ENCODE measurements at regions of chr3 and their contacts with region 1.

Region 1: GRCh38 chr3:123489400-123490004 is 40.6 kb upstream of the ADCY5 start:
- DNase-seq: peak; percentile 67
- H3K4me3 ChIP-seq: no peak overlapping the region
- H3K27ac ChIP-seq: no peak overlapping the region
- H3K4me1 ChIP-seq: no peaks in the 10 kb centered on the region
- H3K27me3 ChIP-seq: no peaks in the 10 kb centered on the region
- CTCF ChIP-seq: peak; percentile 85 to 89
- POLR2A ChIP-seq: no peak

Region 2: GRCh38 chr3:123286308-123287023 is 203.0 kb before region 1 on chr3:
- CTCF ChIA-PET with region 1: interaction called, 11 read pairs
- POLR2A ChIA-PET with region 1: no interaction called
- dilution Hi-C with region 1: no loop called
- intact Hi-C with region 1: loop called (anchors 1 kb)
- DNase-seq: peak; percentile 52
- H3K4me3 ChIP-seq: no peak overlapping the region
- H3K27ac ChIP-seq: no peak overlapping the region
- H3K4me1 ChIP-seq: no peaks in the 10 kb centered on the region
- H3K27me3 ChIP-seq: no peaks in the 10 kb centered on the region
- CTCF ChIP-seq: peak; percentile 84 to 92
- POLR2A ChIP-seq: no peak

Region 3: GRCh38 chr3:123328851-123329635 is 160.5 kb before region 1 on chr3:
- CTCF ChIA-PET with region 1: interaction called, 121 read pairs
- POLR2A ChIA-PET with region 1: no interaction called
- dilution Hi-C with region 1: no loop called
- intact Hi-C with region 1: loop called (anchors 1 kb)
- DNase-seq: peak; percentile 52
- H3K4me3 ChIP-seq: no peak overlapping the region
- H3K27ac ChIP-seq: no peak overlapping the region
- H3K4me1 ChIP-seq: no peaks in the 10 kb centered on the region
- H3K27me3 ChIP-seq: no peaks in the 10 kb centered on the region
- CTCF ChIP-seq: peak; percentile 86 to 96
- POLR2A ChIP-seq: no peak

Region 4: GRCh38 chr3:123449102-123449996 is 40.2 kb before region 1 on chr3:
- CTCF ChIA-PET with region 1: interaction called, 19 read pairs
- POLR2A ChIA-PET with region 1: no interaction called
- dilution Hi-C with region 1: no loop called
- intact Hi-C with region 1: loop called (anchors 2 kb)
- DNase-seq: peak; percentile 4
- H3K4me3 ChIP-seq: peak overlapping the region in 2 of 3 experiments; percentile 32 to 38
- H3K27ac ChIP-seq: no peak overlapping the region
- H3K4me1 ChIP-seq: no peaks in the 10 kb centered on the region
- H3K27me3 ChIP-seq: peaks cover 38 to 58% of the 10 kb centered on the region in 2 experiments
- CTCF ChIP-seq: no peak
- POLR2A ChIP-seq: no peak